ENCODE measurements at regions of chr16 and their contacts with region 1.

Region 1: GRCh38 chr16:72501739-72502593 is 330.0 kb upstream of the PMFBP1 start:
- DNase-seq: peak; percentile 79
- ATAC-seq: peak; percentile 99
- H3K4me3 ChIP-seq: no peak overlapping the region
- H3K27ac ChIP-seq: no peak overlapping the region
- H3K4me1 ChIP-seq: no peaks in the 10 kb centered on the region
- H3K27me3 ChIP-seq: no peaks in the 10 kb centered on the region
- CTCF ChIP-seq: peak; percentile 96
- POLR2A ChIP-seq: 0 out of 2 replicates have a peak, but pooled peaks have one; percentile 35
- RAD21 ChIP-seq: peak; percentile 95

Region 2: GRCh38 chr16:72203401-72203800 is 298.6 kb before region 1 on chr16:
- CTCF ChIA-PET with region 1: no interaction called
- POLR2A ChIA-PET with region 1: no interaction called
- dilution Hi-C with region 1: no loop called
- in situ Hi-C with region 1: no loop called
- intact Hi-C with region 1: no loop called
- DNase-seq: peak; percentile 4
- ATAC-seq: no peak
- H3K4me3 ChIP-seq: no peak overlapping the region
- H3K27ac ChIP-seq: no peak overlapping the region
- H3K4me1 ChIP-seq: no peaks in the 10 kb centered on the region
- H3K27me3 ChIP-seq: no peaks in the 10 kb centered on the region
- CTCF ChIP-seq: no peak
- POLR2A ChIP-seq: no peak
- RAD21 ChIP-seq: no peak

Region 3: DNA sequence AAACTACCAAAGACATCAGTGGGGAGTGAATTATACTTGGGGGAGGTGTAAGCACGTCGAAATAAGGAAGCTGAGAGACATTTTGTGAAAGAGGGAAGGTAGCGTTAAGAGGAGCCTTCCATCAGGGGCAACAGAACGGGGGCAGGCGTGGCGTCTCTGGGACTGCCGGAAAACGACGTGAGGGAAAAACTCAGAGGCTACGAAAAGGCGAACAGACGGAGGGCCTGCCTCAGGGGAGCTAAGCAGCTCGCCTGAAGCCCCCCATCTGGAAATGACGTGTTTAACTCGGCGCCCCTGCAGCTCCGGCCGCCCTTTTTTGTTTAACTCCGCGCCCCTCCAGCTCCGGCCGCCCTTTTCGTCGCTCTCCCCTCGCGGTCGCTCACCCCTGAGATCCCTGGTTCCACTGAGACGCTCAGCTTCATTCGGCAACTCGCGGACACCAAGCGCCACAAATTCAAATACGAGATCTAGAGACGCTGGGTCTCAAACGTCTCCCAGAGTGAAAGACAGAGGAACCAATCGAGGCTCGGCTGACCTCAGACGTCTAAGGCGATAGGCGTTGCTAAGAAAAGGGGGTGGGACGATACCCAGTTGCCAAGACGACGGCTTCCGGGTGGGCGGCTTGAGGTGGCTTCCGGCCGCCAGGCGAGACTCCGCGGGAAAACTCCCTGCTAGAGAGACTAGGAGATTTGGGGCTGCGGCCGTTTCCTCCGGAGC is 162.7 kb after region 1 on chr16:
- CTCF ChIA-PET with region 1: interaction called, 4 read pairs
- POLR2A ChIA-PET with region 1: no interaction called
- dilution Hi-C with region 1: no loop called
- in situ Hi-C with region 1: no loop called
- intact Hi-C with region 1: loop called (anchors 5 kb)
- DNase-seq: peak; percentile 99
- ATAC-seq: peak; percentile 100
- H3K4me3 ChIP-seq: peak overlapping the region; percentile 65
- H3K27ac ChIP-seq: peak overlapping the region; percentile 26; the same call in 1 of the 2 replicates
- H3K4me1 ChIP-seq: no peaks in the 10 kb centered on the region
- H3K27me3 ChIP-seq: no peaks in the 10 kb centered on the region
- CTCF ChIP-seq: no peak
- POLR2A ChIP-seq: peak; percentile 67; the same call in 1 of the 2 replicates
- RAD21 ChIP-seq: no peak

Region 4: GRCh38 chr16:72832621-72833248 is 330.8 kb after region 1 on chr16:
- CTCF ChIA-PET with region 1: interaction called, 3 read pairs
- POLR2A ChIA-PET with region 1: no interaction called
- dilution Hi-C with region 1: no loop called
- in situ Hi-C with region 1: no loop called
- intact Hi-C with region 1: loop called (anchors 2 kb)
- DNase-seq: peak; percentile 70
- ATAC-seq: peak; percentile 97
- H3K4me3 ChIP-seq: no peak overlapping the region
- H3K27ac ChIP-seq: no peak overlapping the region
- H3K4me1 ChIP-seq: peaks cover 4% of the 10 kb centered on the region
- H3K27me3 ChIP-seq: no peaks in the 10 kb centered on the region
- CTCF ChIP-seq: peak; percentile 96
- POLR2A ChIP-seq: no peak
- RAD21 ChIP-seq: peak; percentile 96

Region 5: DNA sequence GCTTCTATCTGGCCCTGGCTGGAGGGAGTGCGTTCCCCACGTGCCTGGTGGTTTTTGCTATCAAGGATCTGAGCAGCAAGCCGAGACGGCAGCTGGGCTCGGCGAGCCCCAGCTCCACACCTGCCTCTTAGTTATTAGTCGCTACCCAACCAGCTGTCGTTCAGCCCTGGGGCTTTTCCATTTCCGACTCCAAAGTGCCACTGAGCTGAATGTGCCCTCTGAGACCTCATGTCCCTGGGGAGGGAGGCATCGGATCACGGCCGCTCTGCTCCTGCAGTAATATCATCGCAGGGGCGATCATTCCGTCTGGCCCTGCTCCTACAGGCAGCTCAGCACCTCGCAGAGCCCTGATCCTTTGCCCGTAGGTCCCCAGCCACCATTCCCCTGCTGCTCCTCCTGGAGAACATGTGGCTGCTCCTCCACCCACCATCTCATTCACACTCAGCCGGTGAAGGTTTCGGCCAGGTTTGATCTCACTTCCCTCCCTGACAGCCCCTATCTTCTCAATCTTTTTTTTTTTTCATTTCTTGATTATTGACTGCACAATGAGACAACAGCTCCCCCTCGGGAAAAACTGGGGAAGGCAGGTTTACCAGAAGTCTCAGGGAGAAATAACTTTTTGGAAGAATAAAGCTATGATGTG is 459.3 kb after region 1 on chr16:
- CTCF ChIA-PET with region 1: interaction called, 3 read pairs
- POLR2A ChIA-PET with region 1: no interaction called
- dilution Hi-C with region 1: no loop called
- in situ Hi-C with region 1: no loop called
- intact Hi-C with region 1: loop called (anchors 5 kb)
- DNase-seq: peak; percentile 30
- ATAC-seq: no peak
- H3K4me3 ChIP-seq: no peak overlapping the region
- H3K27ac ChIP-seq: no peak overlapping the region
- H3K4me1 ChIP-seq: peaks cover 2% of the 10 kb centered on the region
- H3K27me3 ChIP-seq: no peaks in the 10 kb centered on the region
- CTCF ChIP-seq: peak; percentile 58
- POLR2A ChIP-seq: no peak
- RAD21 ChIP-seq: peak; percentile 67

Region 6: DNA sequence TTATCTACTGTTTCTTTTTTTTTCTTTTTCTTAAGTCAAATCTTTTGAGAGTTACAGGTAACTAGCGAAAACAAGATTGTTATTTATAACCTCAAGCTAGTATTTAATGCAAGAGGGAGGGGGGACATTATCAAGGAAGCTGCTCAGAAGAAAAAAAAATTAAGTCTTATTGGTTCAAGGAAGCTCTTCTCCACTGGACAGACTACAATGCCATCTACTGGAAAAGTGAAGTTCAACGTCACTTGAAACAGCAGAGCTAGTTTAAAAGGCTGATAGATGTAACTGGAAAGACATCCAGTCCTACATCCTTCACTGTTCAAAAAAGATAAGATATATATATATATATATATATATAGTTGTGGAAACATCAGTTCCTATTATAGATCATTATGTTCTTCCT is 1376.6 kb after region 1 on chr16:
- CTCF ChIA-PET with region 1: interaction called, 8 read pairs
- POLR2A ChIA-PET with region 1: no interaction called
- dilution Hi-C with region 1: no loop called
- in situ Hi-C with region 1: loop called (anchors 25 kb)
- intact Hi-C with region 1: loop called (anchors 1 kb)
- DNase-seq: peak; percentile 76
- ATAC-seq: peak; percentile 77
- H3K4me3 ChIP-seq: no peak overlapping the region
- H3K27ac ChIP-seq: no peak overlapping the region
- H3K4me1 ChIP-seq: no peaks in the 10 kb centered on the region
- H3K27me3 ChIP-seq: no peaks in the 10 kb centered on the region
- CTCF ChIP-seq: peak; percentile 67
- POLR2A ChIP-seq: no peak
- RAD21 ChIP-seq: peak; percentile 84

Measured in IMR-90 (cell line).